Upper lobe of right lung (tissue), 1 donor: ENCODE measurements at regions of chr1 and their contacts with region 1.

Region 1: DNA sequence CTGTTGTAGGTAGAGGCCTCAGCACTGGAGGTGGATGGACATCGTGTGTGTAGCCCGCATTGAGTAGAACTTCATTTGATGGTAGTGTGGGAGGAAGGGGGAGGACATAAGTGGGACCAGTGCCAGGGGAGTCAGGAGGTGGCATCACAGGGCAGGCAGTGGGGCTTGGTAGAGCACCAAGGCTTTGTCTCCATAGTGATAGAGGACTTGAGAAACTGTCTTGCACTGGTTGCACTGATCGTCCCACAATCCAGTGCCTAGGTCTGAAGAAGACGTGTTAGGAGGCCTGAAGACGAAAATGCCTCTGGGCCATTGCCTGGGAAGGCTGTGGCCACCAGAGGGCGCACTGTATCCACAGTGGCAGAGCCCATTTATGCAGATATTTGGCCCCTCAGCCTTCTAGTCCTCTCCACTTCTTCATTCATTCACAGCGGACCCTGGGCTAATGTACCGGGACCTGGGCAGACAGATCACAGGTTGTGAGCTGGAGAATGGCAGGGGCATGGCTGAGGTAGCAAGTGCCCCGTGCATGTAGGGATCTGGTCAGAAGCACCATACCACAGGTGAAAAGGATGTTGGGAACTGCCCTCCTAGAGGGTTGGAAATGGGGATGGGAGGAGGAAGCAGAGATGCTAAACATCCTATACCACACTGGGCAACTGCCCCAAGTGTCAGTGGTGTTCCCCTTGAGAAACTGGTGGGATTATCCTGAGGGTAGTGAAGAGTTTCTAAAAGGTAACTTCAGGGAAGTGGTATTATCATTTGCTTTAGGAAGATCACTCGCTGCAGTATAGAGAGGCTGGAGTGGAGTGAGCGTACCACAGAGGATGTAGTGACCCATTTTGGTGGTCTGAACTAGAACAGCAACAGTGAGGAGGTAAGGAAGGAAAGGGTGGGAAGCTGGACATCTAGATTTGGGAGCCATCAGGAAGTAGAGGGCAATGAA is 95.3 kb downstream of the PIK3R3 start:
- DNase-seq: peak; percentile 91
- ATAC-seq: peak; percentile 90
- H3K4me3 ChIP-seq: no peak overlapping the region
- H3K27ac ChIP-seq: peak overlapping the region; percentile 11
- H3K4me1 ChIP-seq: peaks cover 16% of the 10 kb centered on the region
- H3K27me3 ChIP-seq: no peaks in the 10 kb centered on the region
- CTCF ChIP-seq: peak; percentile 99

Region 2: DNA sequence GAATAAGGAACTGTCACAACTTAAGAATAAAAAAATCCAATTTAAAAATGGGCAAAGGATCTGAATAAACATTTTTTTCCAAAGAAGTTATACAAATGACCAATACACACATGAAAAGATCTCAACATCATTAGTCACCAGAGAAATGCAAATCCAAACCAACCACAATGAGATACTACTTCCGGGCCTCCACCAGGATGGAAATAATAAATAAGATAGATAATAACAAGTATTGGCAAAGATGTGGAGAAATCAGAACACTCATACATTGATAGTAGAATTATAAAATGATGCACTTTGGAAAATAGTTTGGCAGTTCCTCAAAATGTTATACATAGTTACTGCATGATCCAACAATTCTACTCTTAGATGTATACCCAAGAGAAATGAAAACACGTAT is 849.4 kb before region 1 on chr1:
- intact Hi-C with region 1: no loop called
- DNase-seq: no peak
- ATAC-seq: no peak
- H3K4me3 ChIP-seq: no peak overlapping the region
- H3K27ac ChIP-seq: no peak overlapping the region
- H3K4me1 ChIP-seq: no peaks in the 10 kb centered on the region
- H3K27me3 ChIP-seq: no peaks in the 10 kb centered on the region
- CTCF ChIP-seq: no peak

Region 3: GRCh38 chr1:46117810-46118494 is 80.8 kb after region 1 on chr1:
- intact Hi-C with region 1: no loop called
- DNase-seq: no peak
- ATAC-seq: no peak
- H3K4me3 ChIP-seq: no peak overlapping the region
- H3K27ac ChIP-seq: no peak overlapping the region
- H3K4me1 ChIP-seq: no peaks in the 10 kb centered on the region
- H3K27me3 ChIP-seq: no peaks in the 10 kb centered on the region
- CTCF ChIP-seq: no peak

Region 4: GRCh38 chr1:46179138-46180081 is 142.2 kb after region 1 on chr1:
- intact Hi-C with region 1: loop called (anchors 2 kb)
- DNase-seq: peak; percentile 73
- ATAC-seq: peak; percentile 87
- H3K4me3 ChIP-seq: no peak overlapping the region
- H3K27ac ChIP-seq: no peak overlapping the region
- H3K4me1 ChIP-seq: peaks cover 21% of the 10 kb centered on the region
- H3K27me3 ChIP-seq: no peaks in the 10 kb centered on the region
- CTCF ChIP-seq: peak; percentile 92